ENCODE measurements at regions of chr2 and their contacts with region 1.

Region 1: GRCh38 chr2:42944779-42945415 is 152.5 kb upstream of the HAAO start:
- DNase-seq: no peak
- H3K4me3 ChIP-seq: no peak overlapping the region
- CTCF ChIP-seq: no peak

Region 2: DNA sequence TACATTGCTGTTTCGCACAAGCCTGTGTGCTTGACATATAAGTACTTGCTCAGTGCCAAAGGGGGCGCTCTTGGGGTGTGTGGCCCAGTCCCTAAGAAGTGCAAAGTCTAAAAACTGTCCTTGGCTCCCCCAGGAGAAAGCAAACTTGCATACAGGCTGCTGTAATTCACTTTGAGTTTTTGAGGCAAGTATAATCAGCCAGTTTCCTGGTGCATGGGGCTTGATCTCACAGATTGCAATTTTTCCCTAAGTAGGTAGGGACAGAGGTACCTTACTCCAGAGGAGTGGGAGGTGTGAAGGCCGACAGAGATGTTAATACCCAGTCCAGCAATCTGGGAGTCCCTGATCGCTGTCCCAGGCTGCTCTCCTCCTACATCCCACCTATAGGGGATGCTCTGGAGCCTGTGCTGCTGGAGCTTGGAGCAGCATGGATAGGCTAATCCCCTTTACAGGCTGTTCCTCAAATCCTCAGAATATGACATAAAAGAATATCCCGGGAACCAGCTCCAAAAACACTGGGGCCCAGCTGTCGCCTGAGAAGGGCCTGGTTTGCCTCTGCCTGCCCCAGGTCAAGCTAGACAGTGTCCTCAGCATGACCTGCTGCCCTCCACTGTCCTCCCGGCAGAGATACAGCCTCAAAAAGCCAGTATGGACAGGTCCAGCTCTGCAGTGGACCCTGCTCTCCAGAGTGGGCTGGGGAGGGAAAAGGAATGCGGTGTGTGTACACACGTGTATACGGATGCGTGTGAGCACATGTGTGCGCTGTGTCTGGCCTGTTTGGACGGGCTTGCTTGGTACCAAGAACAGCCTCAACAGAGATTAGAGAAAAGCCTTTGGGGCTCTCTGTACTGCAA is 16.0 kb before region 1 on chr2:
- CTCF ChIA-PET with region 1: interaction called, 126 read pairs
- POLR2A ChIA-PET with region 1: no interaction called
- DNase-seq: no peak
- H3K4me3 ChIP-seq: no peak overlapping the region
- CTCF ChIP-seq: peak; percentile 64

Region 3: DNA sequence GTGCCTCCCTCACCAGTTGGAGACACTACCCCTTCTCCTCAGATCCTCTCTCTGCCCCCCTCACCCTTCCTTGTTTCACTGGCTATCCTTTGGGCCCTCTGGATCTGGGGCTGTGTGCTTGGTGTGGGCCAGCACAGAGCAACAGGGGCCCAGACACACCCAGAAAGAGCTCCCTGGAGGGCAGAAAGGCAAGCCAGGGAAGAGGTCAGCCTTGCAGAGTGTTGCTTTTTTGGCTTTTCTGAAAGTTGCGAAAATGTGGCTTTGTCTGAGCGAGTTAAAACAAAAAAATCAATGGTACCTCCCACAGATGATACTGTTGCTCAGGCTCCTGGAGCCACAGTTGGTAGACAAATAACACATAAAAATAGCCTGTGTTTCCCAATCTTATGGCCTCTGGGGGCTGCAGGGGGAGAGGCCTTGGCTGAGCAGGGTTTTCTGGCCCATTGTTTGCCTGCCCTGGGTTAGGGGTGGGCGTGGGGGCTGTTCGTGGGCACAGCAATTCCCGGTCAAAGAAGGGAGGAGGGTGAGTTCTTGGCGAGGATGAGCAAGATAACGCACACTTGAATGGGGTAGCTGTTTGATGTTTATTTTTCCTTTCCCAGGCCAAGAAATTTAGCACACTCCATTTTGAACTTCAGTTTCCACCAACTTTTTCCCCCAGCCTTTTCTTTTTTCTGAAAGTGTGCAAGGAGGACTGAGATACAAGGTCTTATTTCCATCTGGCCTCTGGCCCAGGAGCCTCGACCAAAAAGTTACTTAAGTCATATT is 14.5 kb after region 1 on chr2:
- CTCF ChIA-PET with region 1: interaction called, 20 read pairs
- POLR2A ChIA-PET with region 1: no interaction called
- DNase-seq: no peak
- H3K4me3 ChIP-seq: no peak overlapping the region
- CTCF ChIP-seq: no peak

Region 4: DNA sequence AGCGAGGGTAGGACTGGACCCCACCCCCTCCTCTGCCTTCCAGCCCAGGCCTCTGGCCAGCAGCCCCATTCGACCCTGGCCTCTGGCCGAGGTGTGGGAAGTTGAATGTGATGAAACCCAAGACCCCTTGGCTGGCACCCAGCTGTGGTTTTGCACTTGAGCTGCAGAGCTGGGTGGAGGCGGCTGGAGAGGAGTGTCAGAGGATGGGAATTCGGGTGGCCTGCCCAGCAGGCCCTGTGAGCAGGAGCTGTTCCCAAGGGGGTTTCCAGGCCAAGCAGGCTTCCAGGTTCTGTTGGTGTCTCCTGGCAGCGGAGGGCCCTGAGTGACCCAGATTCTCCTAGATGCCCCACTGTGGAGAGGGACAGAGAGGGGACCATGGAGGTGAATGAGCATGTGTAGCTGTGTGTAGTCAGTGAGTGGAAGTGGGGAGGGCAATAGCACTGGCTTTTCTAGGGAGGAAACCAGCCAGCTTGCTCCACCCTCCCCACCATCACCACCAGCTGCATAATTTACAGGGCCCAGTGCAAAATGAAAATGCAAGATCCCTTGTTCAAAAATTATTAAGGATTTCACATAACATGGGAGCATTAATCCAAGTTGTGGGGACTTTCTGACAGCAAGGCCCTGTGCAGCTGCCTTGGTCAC is 19.7 kb after region 1 on chr2:
- CTCF ChIA-PET with region 1: interaction called, 20 read pairs
- POLR2A ChIA-PET with region 1: interaction called, 5 read pairs
- DNase-seq: peak; percentile 81
- H3K4me3 ChIP-seq: no peak overlapping the region
- CTCF ChIP-seq: no peak

Region 5: GRCh38 chr2:42974721-42975717 is 30.1 kb after region 1 on chr2:
- CTCF ChIA-PET with region 1: interaction called, 39 read pairs
- POLR2A ChIA-PET with region 1: interaction called, 5 read pairs
- DNase-seq: no peak
- H3K4me3 ChIP-seq: peak overlapping the region; percentile 48
- CTCF ChIP-seq: peak; percentile 99

Region 6: DNA sequence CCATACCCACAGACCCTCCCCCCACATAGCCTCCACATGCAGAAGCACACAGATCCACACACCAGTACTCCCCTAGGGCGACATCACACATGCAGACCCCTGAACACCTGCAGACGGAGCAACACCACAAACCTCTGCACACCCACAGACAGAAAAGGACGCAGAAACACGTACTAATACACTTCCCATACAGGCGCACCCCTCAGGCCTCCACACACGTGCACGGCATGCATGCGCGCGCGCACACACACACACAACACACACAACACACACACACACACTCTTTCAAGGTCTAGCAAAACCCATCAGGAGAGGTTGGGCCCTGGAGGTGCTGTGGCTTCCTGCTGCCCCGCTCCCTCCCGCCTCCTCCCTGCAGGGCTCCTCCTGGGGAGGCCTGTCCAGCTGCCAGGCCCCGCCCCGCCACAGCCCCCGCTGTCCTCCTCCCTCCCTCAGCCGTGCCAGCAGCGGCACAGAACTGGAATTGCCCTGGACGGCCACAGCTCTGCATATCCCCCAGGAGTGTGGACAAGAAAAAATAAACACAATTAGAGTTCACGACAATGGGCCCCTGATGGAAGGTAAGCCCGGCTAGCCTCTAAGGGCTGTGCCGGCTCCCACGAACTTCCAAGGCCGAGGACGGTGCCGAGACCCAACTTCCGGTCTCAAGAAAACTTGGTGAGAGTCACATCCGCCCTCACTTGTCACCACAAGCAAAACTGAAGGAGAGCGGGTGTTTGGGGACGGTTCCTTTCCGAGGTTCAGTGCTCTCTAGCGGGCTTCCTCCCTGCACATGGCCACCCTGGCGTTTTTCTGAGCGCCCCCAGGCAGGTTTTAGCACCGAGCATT is 274.7 kb after region 1 on chr2:
- CTCF ChIA-PET with region 1: interaction called, 293 read pairs
- POLR2A ChIA-PET with region 1: interaction called, 5 read pairs
- DNase-seq: no peak
- H3K4me3 ChIP-seq: peak overlapping the region; percentile 86
- CTCF ChIP-seq: no peak

Region 7: DNA sequence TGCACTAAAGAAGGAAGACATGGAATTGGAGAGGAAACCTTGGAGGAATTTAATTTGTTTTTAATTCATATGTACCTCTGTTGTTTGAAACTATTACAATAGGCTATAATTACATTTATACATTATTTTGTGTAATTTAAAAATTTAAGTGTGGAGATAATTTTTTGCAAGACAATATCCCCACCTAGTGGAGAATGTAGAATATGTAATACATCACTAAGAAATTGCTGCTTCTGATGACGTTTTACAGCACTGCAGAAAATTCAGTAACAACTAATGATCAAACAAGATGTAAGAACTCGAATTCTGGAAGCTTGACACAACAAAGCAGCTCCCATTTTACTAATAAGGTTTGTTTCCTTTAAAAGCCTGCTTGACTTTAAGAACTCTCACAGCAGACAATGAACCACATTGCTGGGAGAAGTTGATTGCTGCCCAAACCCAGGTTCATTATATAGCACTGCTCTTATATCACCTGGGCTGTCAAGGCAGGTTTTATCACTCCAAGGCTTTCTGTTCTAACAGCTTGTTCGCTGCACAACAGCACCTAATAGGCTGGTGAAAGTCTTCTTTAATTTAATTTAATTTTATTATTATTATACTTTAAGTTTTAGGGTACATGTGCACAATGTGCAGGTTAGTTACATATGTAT is 597.5 kb after region 1 on chr2:
- CTCF ChIA-PET with region 1: interaction called, 43 read pairs
- POLR2A ChIA-PET with region 1: no interaction called
- DNase-seq: no peak
- H3K4me3 ChIP-seq: no peak overlapping the region
- CTCF ChIP-seq: peak; percentile 12